ENCODE measurements at regions of chr2 and their contacts with region 1.

Region 1: DNA sequence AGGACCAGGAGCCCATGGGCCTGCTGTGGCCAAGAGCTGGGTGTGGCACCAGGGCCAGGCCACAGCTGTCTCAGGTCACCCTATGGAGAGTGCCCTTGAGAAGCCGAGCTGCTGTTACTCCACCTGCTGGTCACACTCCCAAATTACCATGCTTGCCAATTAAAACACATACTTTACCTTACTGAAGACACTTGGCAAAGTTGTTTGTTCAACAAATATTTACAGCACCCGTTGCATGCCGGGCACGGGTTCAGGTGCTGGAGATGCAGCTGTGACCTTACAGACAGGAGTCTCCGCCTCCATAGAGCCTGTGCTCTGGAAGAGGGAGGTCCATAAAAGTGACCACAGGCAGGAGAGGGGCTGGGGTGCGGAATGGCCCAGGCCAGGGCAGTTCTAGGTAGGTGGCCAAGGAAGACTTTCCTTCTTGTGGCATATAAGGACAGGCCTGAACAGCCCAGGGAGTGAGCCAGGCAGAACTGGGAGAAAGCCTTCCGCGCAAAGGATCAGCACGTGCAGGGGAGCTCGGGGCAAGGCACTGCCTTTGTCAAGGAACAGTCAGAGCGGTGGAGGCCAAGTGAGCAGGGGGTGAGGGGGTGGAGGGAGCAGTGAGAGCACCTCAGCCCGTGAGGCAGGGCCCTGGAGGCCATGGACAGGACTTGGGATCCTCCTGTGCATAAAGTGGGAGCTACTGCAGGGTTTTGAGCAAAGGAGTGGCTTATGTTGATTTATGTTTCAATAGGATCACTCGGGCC is 23.6 kb upstream of the RBM44 start:
- DNase-seq: peak; percentile 59 to 63
- H3K4me3 ChIP-seq: no peak overlapping the region
- H3K27ac ChIP-seq: no peak overlapping the region
- H3K4me1 ChIP-seq: no peaks in the 10 kb centered on the region
- H3K27me3 ChIP-seq: no peaks in the 10 kb centered on the region
- CTCF ChIP-seq: peak; percentile 89

Region 2: DNA sequence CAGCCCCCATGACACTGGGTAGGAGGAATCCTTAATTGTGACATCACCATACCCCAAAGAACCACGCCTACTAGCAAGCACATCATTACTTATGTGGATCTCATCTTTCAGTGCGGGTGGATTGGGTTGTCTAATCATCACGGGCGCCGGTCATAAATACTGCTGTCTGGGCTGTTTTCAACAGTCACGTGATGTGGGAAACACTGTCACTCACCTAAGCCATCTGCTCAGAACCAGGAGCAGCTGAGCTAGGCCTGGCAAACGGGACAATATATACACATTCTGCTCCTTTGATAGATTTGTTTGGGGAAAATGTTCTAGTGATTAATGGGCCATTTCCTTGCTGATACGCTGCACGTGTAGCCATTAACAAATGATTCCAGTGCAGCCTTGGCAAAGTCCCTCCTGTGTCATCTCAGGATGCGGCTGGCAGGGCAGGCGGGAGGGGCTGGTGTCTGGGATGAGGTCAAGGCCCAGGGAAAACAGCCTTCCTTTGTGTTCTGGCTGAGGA is 835.2 kb before region 1 on chr2:
- CTCF ChIA-PET with region 1: no interaction called
- POLR2A ChIA-PET with region 1: interaction called, 10 read pairs
- intact Hi-C with region 1: no loop called
- DNase-seq: no peak
- H3K4me3 ChIP-seq: no peak overlapping the region
- H3K27ac ChIP-seq: no peak overlapping the region
- H3K4me1 ChIP-seq: no peaks in the 10 kb centered on the region
- H3K27me3 ChIP-seq: peaks cover 56% of the 10 kb centered on the region
- CTCF ChIP-seq: no peak